ENCODE measurements at regions of chr1 and their contacts with region 1.

Region 1: DNA sequence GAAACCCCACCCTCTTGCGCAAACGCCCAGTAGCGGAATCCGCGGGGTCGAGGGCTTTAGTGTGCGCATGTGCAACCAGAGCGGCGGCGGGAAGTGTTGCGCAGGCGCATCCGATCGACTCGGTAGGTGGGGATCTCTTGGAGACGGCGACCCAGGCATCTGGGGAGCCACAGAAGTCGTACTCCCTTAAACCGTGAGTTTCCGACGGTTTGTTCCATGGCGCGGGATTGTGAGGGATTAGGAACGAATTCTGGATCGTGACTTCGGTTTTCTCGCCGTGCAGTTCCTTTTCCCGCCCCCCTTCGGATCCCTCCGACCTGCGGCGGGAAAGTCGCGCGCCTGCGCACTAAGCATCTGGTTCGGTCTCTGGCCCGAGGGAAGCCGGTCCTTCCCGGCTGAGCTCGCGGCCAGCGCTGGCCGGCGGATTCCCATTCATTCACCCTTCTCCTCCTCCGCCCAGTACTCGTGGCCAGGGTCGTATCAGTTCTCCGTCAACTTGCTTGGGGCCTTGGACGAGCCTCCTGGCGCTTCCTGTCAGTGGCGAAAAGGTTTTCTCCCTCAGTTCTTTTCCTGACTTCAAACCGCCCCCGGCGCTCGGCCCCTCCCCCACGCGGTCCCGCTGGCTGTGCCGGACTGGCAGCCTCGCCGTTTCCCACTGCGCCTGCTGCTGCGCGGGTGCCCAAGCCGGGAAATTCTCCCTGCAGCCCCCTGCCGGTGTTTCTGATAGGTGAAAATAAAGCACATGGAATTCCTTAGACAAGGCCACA is at the start of gene CDC7:
- DNase-seq: peak; percentile 81
- H3K4me3 Mint-ChIP-seq: no peak within 1 kb of the TSS
- H3K27ac Mint-ChIP-seq: no peak within 1 kb of the TSS
- H3K4me1 Mint-ChIP-seq: peaks cover 34% of the 10 kb centered on the region
- H3K27me3 Mint-ChIP-seq: no peaks in the 10 kb centered on the region
- total RNA-seq, gene CDC7: 19.9 and 23.1 TPM in 2 replicates

Region 2: DNA sequence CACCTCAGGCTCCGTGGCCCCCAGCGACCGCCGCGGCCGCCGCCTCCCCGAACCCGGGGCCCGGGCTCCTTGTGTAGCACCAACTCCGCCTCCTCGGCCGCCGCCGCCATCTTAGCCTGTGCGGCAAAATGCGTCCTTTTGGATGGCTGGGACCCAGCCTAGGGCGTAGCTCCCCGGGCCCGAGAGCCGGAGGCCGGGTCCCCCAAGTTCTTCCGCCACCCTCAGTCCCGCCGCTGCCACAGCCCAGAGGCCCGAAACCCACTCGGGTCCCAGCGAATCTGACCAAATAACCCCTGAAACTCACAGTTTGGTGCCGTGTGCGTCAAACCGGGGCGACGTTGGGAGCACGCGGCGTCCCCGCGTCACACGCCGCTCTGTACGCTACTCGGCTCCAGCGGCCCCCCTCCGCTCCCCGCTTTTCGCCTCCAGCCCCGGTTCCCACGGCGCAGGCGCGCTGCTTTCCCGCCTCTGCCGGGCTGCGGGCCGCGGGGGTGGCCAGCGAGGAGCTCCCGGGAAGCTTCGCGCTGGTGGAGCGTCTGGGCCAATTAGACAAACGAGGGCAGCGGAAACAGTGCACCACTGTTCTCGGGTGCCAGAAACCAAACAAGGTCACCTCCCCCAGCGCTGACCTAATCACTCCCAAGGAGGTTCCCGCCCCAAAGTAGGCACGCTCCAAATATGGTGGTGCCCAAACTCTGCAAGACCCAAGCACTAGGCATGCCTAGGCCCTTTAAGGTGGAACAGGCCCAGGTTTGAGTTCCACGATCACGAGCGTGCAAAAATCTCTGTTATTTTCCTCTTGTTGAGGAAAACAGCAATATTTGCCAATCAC is 479.0 kb before region 1 on chr1 and contains the start of gene ZNF644:
- intact Hi-C with region 1: loop called (anchors 1 kb)
- DNase-seq: peak; percentile 87
- H3K4me3 Mint-ChIP-seq: peak within 1 kb of the TSS; percentile 92
- H3K27ac Mint-ChIP-seq: peak within 1 kb of the TSS; percentile 99
- H3K4me1 Mint-ChIP-seq: peaks cover 48% of the 10 kb centered on the region
- H3K27me3 Mint-ChIP-seq: peaks cover 2% of the 10 kb centered on the region
- total RNA-seq, gene ZNF644: 60.4 and 68.7 TPM in 2 replicates

Region 3: DNA sequence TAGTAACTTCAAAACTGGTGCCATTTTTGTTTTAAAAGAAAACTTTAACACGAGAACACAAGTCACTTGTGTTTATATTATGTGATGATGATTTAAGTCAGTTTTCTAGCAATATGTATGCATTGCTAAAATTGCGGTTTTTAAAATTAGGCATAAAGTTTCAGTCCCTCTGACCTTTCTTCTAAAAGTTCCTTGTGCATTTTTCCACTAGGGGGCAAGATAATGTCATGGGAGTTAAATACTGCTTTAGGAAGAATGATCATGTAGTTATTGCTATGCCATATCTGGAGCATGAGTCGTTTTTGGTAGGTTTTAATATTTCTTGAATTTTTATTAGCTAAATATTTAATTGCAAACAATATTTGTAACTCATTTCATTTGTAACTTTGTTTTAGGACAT is 10.4 kb after region 1 on chr1:
- intact Hi-C with region 1: loop called (anchors 1 kb)
- DNase-seq: no peak
- H3K4me3 Mint-ChIP-seq: no peak overlapping the region
- H3K27ac Mint-ChIP-seq: no peak overlapping the region
- H3K4me1 Mint-ChIP-seq: peaks cover 25% of the 10 kb centered on the region
- H3K27me3 Mint-ChIP-seq: no peaks in the 10 kb centered on the region

Region 4: GRCh38 chr1:91712981-91713841 is 212.3 kb after region 1 on chr1:
- intact Hi-C with region 1: loop called (anchors 1 kb)
- DNase-seq: peak; percentile 52
- H3K4me3 Mint-ChIP-seq: peak overlapping the region; percentile 61
- H3K27ac Mint-ChIP-seq: peak overlapping the region; percentile 94
- H3K4me1 Mint-ChIP-seq: peaks cover 59% of the 10 kb centered on the region
- H3K27me3 Mint-ChIP-seq: peaks cover 4% of the 10 kb centered on the region

Region 5: DNA sequence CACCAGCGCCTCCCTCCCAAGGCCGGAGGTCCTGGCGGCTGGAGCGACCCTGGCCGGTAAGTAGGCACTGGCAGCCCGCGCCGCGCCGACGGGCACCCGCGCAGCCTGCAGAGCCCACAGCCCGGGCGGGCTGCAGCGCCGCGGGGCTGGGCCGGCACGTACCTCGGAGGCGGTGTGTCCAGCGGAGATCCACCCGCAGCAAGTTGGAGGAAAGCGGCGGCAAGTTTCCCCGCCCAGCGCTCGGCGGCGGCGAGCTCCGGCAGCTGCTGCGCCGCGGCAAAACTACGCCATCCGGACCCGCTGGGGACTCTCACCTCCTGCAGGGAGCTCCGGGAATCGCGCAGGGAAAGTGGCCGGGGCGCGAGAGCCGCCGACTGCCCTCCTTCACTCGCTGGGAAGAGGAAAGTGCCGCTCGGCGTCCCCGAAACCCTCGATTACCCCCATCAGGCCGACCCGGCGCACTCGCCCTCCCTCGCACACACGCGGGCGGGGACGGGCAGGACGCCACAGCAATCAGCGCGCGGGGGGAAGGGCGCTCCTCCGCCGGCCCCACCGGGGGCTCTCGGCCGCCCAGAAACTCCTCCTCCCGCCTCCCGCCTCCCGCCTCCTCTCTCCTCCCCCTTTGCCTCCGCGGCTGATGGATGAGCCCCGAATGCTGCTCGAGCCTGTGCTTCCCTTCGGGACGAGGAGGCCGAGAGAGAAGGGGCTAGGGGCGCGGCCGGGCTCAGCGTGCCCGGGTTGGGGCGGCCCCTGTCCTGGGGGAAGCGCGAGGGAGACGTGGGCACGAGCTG is 385.0 kb after region 1 on chr1 and contains the start of gene TGFBR3:
- intact Hi-C with region 1: loop called (anchors 2 kb)
- DNase-seq: peak; percentile 56
- H3K4me3 Mint-ChIP-seq: peak within 1 kb of the TSS; percentile 98
- H3K27ac Mint-ChIP-seq: peak within 1 kb of the TSS; percentile 84
- H3K4me1 Mint-ChIP-seq: peaks cover 28% of the 10 kb centered on the region
- H3K27me3 Mint-ChIP-seq: peaks cover 19% of the 10 kb centered on the region
- total RNA-seq, gene TGFBR3: 8.9 and 11.8 TPM in 2 replicates

Region 6: GRCh38 chr1:92291372-92291999 is 790.5 kb after region 1 on chr1:
- intact Hi-C with region 1: loop called (anchors 5 kb)
- DNase-seq: no peak
- H3K4me3 Mint-ChIP-seq: no peak overlapping the region
- H3K27ac Mint-ChIP-seq: no peak overlapping the region
- H3K4me1 Mint-ChIP-seq: peaks cover 35% of the 10 kb centered on the region
- H3K27me3 Mint-ChIP-seq: no peaks in the 10 kb centered on the region